ENCODE measurements at regions of chr3 and their contacts with region 1.

Region 1: DNA sequence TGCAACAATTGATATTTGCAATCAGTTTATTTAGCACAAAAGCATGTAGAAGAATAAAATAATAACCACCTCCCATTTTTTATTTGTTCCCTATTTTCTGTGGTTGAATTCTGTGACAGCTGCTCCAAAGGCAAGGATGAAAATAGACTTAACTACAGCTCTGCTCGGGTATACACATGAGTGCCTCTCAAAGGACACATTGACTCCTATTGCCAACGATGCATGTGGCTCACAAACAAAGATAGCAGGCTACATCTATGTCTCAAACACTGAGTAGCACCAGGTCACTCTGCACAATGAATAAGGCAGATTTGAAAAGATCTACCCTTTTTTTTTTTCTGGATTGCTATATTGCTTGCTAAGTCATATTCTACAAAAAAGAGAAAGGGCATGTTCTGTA is 612.9 kb downstream of the ROBO1 start:
- DNase-seq: no peak
- ATAC-seq: no peak

Region 2: GRCh38 chr3:77814845-77815244 is 1340.0 kb before region 1 on chr3:
- intact Hi-C with region 1: loop called (anchors 5 kb)
- DNase-seq: no peak
- ATAC-seq: no peak

Region 3: DNA sequence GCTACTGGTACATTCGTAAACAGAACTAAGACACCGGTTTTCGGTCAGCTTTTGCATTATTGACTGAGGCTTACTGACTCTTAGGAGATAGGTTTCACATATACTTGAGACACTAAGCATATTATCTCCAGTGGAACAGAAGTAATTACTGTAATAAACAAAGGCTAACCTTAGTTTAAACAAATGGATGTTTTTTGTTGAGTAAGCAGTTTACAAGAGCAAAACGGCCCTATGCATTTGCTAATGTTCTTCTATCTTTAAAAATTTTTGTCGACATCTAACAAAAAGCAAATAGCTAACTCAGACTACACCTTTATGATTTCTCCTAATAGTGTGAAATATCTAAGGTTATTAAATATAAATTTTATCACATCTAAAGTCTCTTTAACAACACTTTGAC is 51.6 kb before region 1 on chr3:
- intact Hi-C with region 1: no loop called
- DNase-seq: no peak
- ATAC-seq: no peak